ENCODE measurements at regions of chr20 and their contacts with region 1.

Region 1: DNA sequence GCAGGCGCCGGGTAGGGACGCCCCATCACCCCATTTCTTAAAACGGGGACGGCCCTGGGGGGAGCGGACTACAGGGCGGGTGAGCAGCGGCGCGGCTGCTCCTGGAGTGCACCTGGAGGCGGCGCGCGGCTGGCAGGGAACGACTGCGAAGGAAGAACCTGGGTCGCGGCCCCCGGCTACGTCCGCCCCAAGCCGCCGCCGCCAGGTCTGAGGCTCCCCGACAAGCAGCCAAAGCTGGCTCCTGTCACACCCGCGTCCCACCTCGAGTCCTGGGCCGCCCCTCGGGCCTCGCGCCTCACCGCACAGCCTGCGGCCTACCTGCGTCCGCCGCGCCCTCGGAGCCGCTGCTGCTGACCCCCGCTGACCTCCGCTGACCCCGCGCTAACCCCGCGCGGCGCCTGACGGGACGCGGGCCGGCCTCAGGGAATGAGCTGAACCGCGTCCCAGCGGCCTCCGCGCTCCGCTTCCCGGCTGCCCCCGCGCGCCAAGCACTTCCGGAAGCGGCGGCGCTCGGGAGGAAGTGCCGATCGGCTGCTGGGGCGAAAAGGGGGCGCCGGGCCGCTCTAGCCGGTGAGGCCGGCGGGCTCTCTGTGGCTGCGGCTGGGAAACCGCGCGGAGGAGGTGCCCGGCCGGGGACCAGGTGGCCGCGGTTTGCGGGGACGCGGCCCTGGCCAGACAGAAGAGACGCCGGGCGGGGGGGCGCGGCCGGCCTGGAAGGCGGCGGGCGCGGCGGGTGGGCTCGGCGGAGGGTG is at the starts of genes ARFRP1 and ZGPAT:
- DNase-seq: peak; percentile 95
- CTCF ChIP-seq: peak; percentile 17

Region 2: DNA sequence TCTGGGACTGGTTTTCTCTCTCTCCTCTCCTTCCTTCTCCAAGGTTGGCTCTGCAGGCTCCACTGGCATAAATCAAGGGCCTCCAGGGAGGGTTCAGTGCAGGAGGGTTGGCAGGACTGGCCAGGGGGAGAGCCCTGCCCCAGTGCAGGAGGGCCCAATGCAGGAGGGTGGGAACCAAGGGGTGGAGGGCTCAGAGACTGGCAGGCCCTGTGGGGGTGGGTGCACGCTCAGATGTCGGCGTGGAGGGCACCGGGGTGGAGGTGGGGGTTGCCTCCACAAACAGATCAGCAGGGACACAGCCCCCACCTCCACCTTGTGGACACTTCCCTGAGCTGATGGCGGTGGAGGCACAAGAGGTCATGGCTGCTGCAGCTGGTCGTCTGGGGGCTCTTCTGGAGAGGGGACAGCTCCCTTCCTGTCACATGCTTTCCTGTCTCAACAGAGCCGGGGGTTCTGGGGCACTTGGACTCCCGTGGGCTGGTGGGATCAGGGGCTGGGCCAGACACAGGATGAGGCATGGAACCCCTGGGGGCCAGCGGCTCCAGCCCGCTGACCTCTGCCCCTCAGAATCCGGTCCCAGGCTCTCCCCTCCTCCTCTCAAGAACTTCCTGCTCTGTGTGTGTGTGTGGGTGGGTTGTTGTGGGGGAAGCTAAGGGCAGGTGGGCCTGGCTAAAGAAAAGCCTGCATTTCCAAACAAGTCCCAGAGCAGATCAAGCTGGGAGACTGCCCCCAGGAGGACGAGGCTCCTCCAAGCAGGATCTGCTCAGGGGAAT is 150.9 kb after region 1 on chr20:
- in situ Hi-C with region 1: loop called (anchors 5 kb)
- DNase-seq: peak; percentile 69
- CTCF ChIP-seq: no peak

Measured in GM13977 (cell line).